Activated T-helper 1 cell treated with anti-CD3 and anti-CD28 coated beads, Interleukin-12 subunit alpha, Interleukin-12 subunit beta, Interleukin-2, Interleukin-4 antibody, amounts not matched to agents 30 ng/mL and 10 ng/mL and 1 ng/mL, durations not matched to agents 14 hours and 24 hours and 36 hours (primary cell): ENCODE measurements at regions of chr13 and their contacts with region 1.

Region 1: GRCh38 chr13:50081679-50082425 is 66.6 kb downstream of the KCNRG start:
- DNase-seq: peak; percentile 99
- H3K4me3 Mint-ChIP-seq: peak overlapping the region; percentile 97
- H3K27ac Mint-ChIP-seq: peak overlapping the region; percentile 100
- H3K4me1 Mint-ChIP-seq: peaks cover 48% of the 10 kb centered on the region
- H3K27me3 Mint-ChIP-seq: no peaks in the 10 kb centered on the region

Region 2: DNA sequence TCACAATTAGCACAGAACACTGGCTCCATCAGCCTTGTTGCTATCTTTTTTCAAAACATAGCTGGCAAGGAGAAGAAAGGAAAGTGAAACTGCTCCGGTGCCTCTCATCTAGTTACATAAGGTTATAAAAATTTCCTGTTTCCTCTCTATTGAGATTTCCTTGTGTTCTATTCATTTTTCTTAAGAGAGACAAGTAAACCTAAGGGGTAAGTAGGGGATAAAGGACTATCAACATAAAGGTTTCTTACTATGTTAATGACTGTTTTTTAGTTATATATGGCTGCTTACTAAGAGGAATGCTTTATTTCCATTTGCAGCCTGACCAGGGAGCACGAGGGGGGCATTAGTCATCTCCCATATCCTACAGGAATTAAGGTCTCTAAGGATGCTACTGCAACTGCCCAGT is 934.9 kb before region 1 on chr13:
- intact Hi-C with region 1: no loop called
- DNase-seq: no peak
- H3K4me3 Mint-ChIP-seq: peak overlapping the region; percentile 80
- H3K27ac Mint-ChIP-seq: peak overlapping the region; percentile 66
- H3K4me1 Mint-ChIP-seq: peaks cover 29% of the 10 kb centered on the region
- H3K27me3 Mint-ChIP-seq: no peaks in the 10 kb centered on the region

Region 3: GRCh38 chr13:49499889-49500660 is 581.8 kb before region 1 on chr13:
- intact Hi-C with region 1: no loop called
- DNase-seq: no peak
- H3K4me3 Mint-ChIP-seq: peak overlapping the region; percentile 36
- H3K27ac Mint-ChIP-seq: peak overlapping the region; percentile 60
- H3K4me1 Mint-ChIP-seq: peaks cover 56% of the 10 kb centered on the region
- H3K27me3 Mint-ChIP-seq: no peaks in the 10 kb centered on the region

Region 4: GRCh38 chr13:49627831-49628652 is 453.8 kb before region 1 on chr13 and contains the start of gene ARL11:
- intact Hi-C with region 1: no loop called
- DNase-seq: peak; percentile 58
- H3K4me3 Mint-ChIP-seq: peak within 1 kb of the TSS; percentile 92
- H3K27ac Mint-ChIP-seq: peak within 1 kb of the TSS; percentile 90
- H3K4me1 Mint-ChIP-seq: peaks cover 17% of the 10 kb centered on the region
- H3K27me3 Mint-ChIP-seq: peaks cover 2% of the 10 kb centered on the region
- total RNA-seq, gene ARL11: 0.80 and 0.93 TPM in 2 replicates

Region 5: GRCh38 chr13:49690992-49691886 is 390.6 kb before region 1 on chr13 and contains the start of gene EBPL:
- intact Hi-C with region 1: loop called (anchors 10 kb)
- DNase-seq: peak; percentile 83
- H3K4me3 Mint-ChIP-seq: peak within 1 kb of the TSS; percentile 92
- H3K27ac Mint-ChIP-seq: peak within 1 kb of the TSS; percentile 77
- H3K4me1 Mint-ChIP-seq: peaks cover 34% of the 10 kb centered on the region
- H3K27me3 Mint-ChIP-seq: no peaks in the 10 kb centered on the region
- total RNA-seq, gene EBPL: 42.6 and 44.6 TPM in 2 replicates

Region 6: DNA sequence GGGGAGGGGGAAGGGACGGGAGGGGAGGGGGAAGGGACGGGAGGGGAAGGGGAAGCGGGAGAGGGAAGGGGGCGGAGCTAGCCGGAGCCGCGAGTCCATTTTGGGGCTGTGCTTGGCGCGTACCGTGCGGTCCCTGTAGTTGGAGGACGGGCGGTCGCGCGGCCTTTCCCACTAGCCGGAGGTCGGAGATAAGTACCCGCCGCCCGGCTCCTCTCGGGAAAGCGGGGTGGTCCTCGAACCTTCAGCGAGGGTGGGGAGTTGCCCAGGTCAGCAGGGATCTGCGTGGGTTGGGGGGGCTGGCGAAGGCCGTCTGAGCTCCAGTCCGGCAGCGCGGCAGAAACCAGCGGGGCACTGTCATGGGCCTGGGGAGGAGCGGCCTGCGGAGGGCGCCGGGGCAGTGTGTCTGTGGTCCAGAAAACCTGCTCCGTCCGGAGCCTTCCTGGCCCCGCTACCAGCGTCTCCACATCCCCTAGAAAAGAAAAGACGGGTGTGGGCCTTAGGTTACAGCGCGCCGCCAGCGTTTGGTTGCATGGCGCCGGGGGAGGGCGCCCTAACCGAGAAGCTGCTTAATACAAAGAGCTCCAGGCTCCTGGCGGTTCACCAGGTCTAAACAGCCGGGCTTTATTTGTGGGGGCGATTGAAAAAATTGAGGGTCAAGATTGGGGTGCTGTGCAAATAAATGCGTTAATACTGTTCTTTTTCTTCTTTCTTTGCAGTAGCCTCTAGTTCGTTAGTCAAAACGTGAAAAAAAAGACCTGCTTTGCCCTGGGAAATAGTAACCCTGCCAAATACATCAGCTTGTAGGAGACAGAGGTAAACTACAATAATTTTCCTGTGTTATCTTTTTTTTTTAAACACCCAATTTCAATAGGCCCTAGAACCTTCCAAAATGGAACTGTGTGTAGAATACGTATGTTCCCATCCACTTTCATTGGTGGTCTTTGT is 84.6 kb before region 1 on chr13 and contains the start of gene TRIM13:
- intact Hi-C with region 1: loop called (anchors 1 kb)
- DNase-seq: peak; percentile 76
- H3K4me3 Mint-ChIP-seq: peak within 1 kb of the TSS; percentile 87
- H3K27ac Mint-ChIP-seq: peak within 1 kb of the TSS; percentile 82
- H3K4me1 Mint-ChIP-seq: peaks cover 54% of the 10 kb centered on the region
- H3K27me3 Mint-ChIP-seq: no peaks in the 10 kb centered on the region
- total RNA-seq, gene TRIM13: 14.7 and 16.5 TPM in 2 replicates

Region 7: GRCh38 chr13:50224534-50224933 is 142.7 kb after region 1 on chr13:
- intact Hi-C with region 1: loop called (anchors 1 kb)
- DNase-seq: no peak
- H3K4me3 Mint-ChIP-seq: peak overlapping the region; percentile 12
- H3K27ac Mint-ChIP-seq: peak overlapping the region; percentile 24
- H3K4me1 Mint-ChIP-seq: peaks cover 75% of the 10 kb centered on the region
- H3K27me3 Mint-ChIP-seq: peaks cover 38% of the 10 kb centered on the region

Region 8: DNA sequence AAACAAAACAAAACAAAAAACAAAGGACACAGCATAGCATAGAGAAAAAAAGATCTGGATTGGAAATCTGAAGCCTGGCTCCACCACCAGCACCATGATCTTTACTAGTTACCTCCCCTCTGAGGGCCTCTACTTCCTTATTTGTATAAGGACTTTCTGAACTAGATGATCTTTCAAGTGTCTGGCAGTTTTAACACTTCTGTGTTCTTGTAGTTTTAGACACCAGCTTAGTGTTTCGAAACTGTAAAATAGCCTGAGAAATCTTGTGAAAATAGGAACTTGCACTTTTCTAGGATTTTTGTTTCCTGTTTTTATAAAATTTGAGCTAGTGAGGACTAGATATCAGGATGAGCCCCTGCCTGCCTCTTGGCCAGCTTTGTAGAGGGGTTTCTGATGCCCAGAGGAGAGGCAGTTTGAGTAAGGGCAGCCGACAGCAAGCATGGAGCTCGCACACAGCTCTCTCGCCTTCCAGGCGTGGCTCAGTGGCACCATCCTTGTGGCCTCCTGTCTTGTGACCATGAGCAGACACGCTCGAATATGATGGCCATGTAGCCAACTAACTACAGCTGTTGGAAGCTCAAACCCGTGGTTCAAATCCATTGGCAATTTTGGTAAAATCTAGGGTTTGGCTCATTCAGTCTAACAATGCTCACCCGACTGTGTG is 252.4 kb after region 1 on chr13:
- intact Hi-C with region 1: no loop called
- DNase-seq: no peak
- H3K4me3 Mint-ChIP-seq: no peak overlapping the region
- H3K27ac Mint-ChIP-seq: no peak overlapping the region
- H3K4me1 Mint-ChIP-seq: no peaks in the 10 kb centered on the region
- H3K27me3 Mint-ChIP-seq: peaks cover 8% of the 10 kb centered on the region

Region 9: DNA sequence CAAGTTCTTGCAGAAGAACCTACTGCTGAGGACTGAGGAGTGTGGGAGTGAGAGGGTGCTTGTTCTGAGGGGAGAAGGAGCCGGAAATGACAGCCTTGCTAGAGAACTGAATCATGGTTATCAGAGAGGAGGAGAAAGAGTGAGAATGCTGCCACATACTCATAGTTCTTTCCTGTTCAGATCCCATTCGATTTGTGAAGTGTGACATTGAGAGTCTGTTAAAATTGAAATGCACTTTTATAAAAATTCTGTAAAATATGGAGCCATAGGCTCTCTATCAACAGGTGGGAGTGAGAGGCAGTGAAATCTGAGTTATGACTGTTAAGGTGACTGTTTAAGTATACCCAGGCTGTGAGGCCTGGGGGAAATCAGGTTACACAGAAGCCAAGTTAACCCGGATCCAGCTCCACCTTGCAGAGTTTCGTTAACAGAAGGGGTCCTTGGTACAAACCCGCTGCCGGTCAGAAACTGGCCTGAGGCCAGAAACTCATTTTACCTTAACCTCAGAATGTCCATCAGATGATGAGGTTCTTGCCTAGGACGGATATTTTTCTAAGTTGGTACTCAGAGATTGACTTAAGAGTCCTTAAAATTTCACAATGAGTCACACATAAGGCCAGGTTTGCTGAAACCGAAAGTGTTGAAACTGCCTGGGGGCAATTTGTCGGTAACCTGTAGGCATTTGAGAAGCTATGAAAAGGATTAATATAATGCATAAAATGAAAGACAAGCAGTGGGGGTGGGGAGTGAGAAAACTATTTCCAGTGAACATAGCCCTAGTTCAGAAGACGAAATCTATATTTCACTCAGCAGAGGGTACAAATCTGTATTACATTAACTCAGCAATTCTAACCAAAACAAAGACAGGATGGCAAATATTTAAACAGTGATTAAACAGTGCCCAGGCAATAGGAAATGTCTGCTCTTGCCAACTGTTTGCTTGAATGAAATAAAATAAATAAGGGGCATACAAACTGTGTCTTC is 283.8 kb after region 1 on chr13:
- intact Hi-C with region 1: loop called (anchors 1 kb)
- DNase-seq: peak; percentile 54
- H3K4me3 Mint-ChIP-seq: peak overlapping the region; percentile 66
- H3K27ac Mint-ChIP-seq: peak overlapping the region; percentile 75
- H3K4me1 Mint-ChIP-seq: peaks cover 48% of the 10 kb centered on the region
- H3K27me3 Mint-ChIP-seq: peaks cover 32% of the 10 kb centered on the region

Region 10: DNA sequence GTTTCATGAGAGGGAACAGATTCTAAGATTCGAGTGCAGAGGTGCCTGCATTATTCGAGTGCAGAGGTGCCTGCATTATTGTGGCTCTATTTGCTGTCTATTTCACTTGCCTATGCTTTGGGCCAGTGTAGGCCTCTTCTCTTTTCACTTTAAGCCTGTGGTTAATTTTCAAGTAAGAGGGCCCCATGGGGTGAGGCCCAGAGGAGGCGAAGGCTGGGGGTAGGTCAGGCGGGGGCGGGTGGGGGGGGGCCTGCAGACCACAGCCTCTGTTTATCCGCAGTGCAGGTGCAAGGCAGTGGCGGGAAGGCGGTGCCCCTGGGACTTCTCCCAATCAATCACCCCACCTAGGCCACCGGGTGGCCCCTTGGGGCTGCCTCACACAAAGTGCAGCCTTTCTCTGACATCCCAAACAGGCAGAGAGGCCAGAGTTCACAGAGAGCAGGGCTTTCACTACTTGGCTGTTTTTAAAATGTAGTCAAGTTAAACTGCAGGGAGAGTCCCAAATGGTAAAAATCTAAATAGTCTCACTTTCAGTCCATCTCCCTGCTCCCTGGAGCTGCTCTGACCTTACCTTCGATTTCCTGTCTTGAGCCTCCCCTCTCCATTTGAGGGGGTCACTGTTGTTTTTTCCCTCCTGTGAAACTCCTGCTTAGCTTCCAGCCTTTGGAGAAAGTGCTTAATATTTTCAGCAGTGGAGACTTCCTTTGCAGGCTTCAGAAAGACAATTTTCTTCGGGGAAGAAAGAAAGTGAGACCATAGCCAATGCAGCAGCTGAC is 512.6 kb after region 1 on chr13:
- intact Hi-C with region 1: loop called (anchors 5 kb)
- DNase-seq: no peak
- H3K4me3 Mint-ChIP-seq: peak overlapping the region; percentile 12
- H3K27ac Mint-ChIP-seq: peak overlapping the region; percentile 10
- H3K4me1 Mint-ChIP-seq: peaks cover 32% of the 10 kb centered on the region
- H3K27me3 Mint-ChIP-seq: peaks cover 4% of the 10 kb centered on the region

Region 11: GRCh38 chr13:50911937-50912795 is 830.3 kb after region 1 on chr13:
- intact Hi-C with region 1: loop called (anchors 1 kb)
- DNase-seq: peak; percentile 87
- H3K4me3 Mint-ChIP-seq: peak overlapping the region; percentile 82
- H3K27ac Mint-ChIP-seq: peak overlapping the region; percentile 37
- H3K4me1 Mint-ChIP-seq: peaks cover 68% of the 10 kb centered on the region
- H3K27me3 Mint-ChIP-seq: no peaks in the 10 kb centered on the region